ENCODE measurements at regions of chr5 and their contacts with region 1.

Region 1: GRCh38 chr5:79133657-79134451 is 22.2 kb downstream of the BHMT start:
- DNase-seq: peak; percentile 82
- H3K4me3 Mint-ChIP-seq: peak overlapping the region; percentile 64
- H3K27ac Mint-ChIP-seq: peak overlapping the region; percentile 93
- H3K4me1 Mint-ChIP-seq: peaks cover 18% of the 10 kb centered on the region
- H3K27me3 Mint-ChIP-seq: peaks cover 1% of the 10 kb centered on the region
- CTCF ChIP-seq: peak; percentile 58

Region 2: GRCh38 chr5:78927657-78928282 is 206.1 kb before region 1 on chr5:
- CTCF ChIA-PET with region 1: no interaction called
- intact Hi-C with region 1: no loop called
- DNase-seq: peak; percentile 44
- H3K4me3 Mint-ChIP-seq: no peak overlapping the region
- H3K27ac Mint-ChIP-seq: peak overlapping the region; percentile 38
- H3K4me1 Mint-ChIP-seq: peaks cover 19% of the 10 kb centered on the region
- H3K27me3 Mint-ChIP-seq: no peaks in the 10 kb centered on the region
- CTCF ChIP-seq: no peak

Region 3: DNA sequence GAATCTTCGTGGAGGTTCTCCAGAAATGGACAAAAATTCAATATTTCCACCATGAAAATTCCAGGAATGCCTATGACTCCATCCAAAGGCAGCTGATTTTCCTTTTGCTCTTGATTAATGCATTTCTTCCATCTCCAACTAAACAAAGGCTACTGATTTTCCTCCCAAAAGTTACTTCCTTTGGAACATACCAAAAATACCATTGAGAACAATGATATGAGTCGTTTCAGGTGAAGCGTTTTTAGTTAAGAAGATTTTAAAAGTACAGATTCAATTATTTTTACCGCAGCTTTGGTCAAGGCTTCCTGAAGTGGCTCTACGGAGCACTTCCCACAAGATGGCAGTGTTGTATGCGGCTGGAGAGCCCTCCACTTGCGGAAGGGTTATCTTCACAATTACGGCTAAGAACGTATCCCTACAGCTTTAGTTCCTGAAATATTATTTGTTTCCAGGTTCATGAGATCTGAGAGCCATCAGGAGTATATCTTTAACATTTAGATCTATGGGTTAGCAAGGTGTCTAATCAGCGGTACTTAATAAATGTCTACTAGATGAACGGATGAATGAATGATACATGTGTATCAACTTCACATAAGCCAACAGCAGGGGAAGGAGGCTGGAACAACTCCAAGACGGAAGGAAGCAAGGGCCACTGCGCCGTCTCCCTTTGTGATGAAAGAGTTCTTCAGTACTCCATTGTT is 112.8 kb before region 1 on chr5:
- CTCF ChIA-PET with region 1: interaction called, 210 read pairs
- intact Hi-C with region 1: loop called (anchors 1 kb)
- DNase-seq: peak; percentile 73
- H3K4me3 Mint-ChIP-seq: peak overlapping the region; percentile 48
- H3K27ac Mint-ChIP-seq: no peak overlapping the region
- H3K4me1 Mint-ChIP-seq: peaks cover 23% of the 10 kb centered on the region
- H3K27me3 Mint-ChIP-seq: no peaks in the 10 kb centered on the region
- CTCF ChIP-seq: peak; percentile 86

Region 4: GRCh38 chr5:79235634-79236363 is 101.9 kb after region 1 on chr5 and contains the start of gene JMY:
- CTCF ChIA-PET with region 1: interaction called, 16 read pairs
- intact Hi-C with region 1: loop called (anchors 5 kb)
- DNase-seq: peak; percentile 88
- H3K4me3 Mint-ChIP-seq: peak within 1 kb of the TSS; percentile 82
- H3K27ac Mint-ChIP-seq: peak within 1 kb of the TSS; percentile 90
- H3K4me1 Mint-ChIP-seq: peaks cover 7% of the 10 kb centered on the region
- H3K27me3 Mint-ChIP-seq: no peaks in the 10 kb centered on the region
- CTCF ChIP-seq: no peak
- total RNA-seq, gene JMY: 12.2 and 12.5 TPM in 2 replicates

Region 5: GRCh38 chr5:79255786-79256557 is 122.1 kb after region 1 on chr5:
- CTCF ChIA-PET with region 1: interaction called, 16 read pairs
- intact Hi-C with region 1: no loop called
- DNase-seq: peak; percentile 74
- H3K4me3 Mint-ChIP-seq: no peak overlapping the region
- H3K27ac Mint-ChIP-seq: no peak overlapping the region
- H3K4me1 Mint-ChIP-seq: peaks cover 18% of the 10 kb centered on the region
- H3K27me3 Mint-ChIP-seq: no peaks in the 10 kb centered on the region
- CTCF ChIP-seq: peak; percentile 83

Region 6: GRCh38 chr5:79857714-79858409 is 724.0 kb after region 1 on chr5:
- CTCF ChIA-PET with region 1: no interaction called
- intact Hi-C with region 1: loop called (anchors 2 kb)
- DNase-seq: peak; percentile 83
- H3K4me3 Mint-ChIP-seq: no peak overlapping the region
- H3K27ac Mint-ChIP-seq: no peak overlapping the region
- H3K4me1 Mint-ChIP-seq: no peaks in the 10 kb centered on the region
- H3K27me3 Mint-ChIP-seq: no peaks in the 10 kb centered on the region
- CTCF ChIP-seq: peak; percentile 97